H1 (cell line): ENCODE measurements at regions of chr7 and their contacts with region 1.

Region 1: DNA sequence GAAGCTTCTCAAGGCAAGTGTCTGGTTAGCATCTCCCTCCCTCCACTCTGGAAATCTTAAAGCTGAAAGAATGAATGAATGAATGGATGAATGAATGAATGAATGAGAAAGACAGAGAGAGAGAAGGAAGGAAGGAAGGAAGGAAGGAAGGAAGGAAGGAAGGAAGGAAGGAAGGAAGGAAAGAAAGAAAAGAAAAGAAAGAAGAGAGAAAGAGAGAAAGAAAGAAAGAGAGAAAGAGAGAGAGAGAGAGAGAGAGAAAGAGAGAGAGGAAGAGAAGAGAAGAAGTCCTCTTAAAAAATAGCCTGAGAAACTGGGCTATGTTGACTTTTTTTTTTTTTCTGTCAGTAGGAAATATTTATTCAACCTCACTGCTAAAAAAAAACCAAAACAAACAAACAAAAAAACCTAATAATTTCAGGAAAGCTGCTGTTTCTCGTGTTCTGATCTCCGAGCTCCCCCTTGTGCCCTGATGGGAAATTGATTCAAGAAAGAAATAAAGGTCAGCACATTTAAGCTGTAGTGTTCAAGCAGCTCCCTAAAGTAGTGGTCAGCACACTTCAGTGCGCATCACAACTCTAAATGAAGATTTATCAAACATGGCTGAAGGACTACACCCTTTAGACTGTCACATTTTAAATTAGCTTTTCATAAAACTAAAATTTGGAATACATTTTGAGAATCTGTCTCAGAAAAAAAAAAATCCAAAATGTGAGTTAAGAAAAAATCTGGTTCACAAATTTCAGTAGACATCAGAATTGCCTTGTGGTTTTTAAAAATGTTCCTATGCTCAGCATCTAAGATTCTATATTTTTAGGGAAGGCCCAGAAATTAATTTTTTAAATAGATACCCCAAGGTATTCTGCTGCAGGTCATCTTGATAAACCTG is 154.3 kb downstream of the ELAPOR2 start:
- DNase-seq: no peak
- H3K4me3 ChIP-seq: no peak overlapping the region
- H3K27ac ChIP-seq: no peak overlapping the region
- H3K4me1 ChIP-seq: no peaks in the 10 kb centered on the region
- H3K27me3 ChIP-seq: no peaks in the 10 kb centered on the region
- CTCF ChIP-seq: peak in 2 of 3 experiments; percentile 57 to 71; a peak in 3 of 4 replicates
- EP300 ChIP-seq: no peak
- POLR2A ChIP-seq: no peak
- RAD21 ChIP-seq: peak; percentile 83 to 89

Region 2: DNA sequence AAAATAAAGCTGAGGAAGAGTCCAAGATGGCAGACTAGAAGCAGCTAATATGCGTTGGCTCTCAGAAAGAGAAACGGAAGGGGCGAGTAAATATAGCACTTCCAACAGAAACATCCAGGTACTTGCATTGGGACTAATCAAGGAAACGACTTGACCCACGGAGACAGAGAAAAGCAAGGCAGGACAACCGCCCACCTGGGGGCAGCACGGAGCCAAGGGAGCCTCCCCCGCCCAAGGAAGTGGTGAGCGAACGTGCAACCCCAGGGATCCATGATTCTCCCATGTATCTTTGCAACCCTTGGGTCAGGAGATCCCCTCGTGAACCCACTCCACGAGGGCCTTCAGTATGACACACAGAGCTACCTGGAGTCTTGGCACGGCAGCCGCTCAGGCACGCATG is 306.9 kb before region 1 on chr7:
- CTCF ChIA-PET with region 1: interaction called, 29 read pairs
- POLR2A ChIA-PET with region 1: no interaction called
- DNase-seq: peak; percentile 56 to 88
- H3K4me3 ChIP-seq: no peak overlapping the region
- H3K27ac ChIP-seq: no peak overlapping the region
- H3K4me1 ChIP-seq: no peaks in the 10 kb centered on the region
- H3K27me3 ChIP-seq: no peaks in the 10 kb centered on the region
- CTCF ChIP-seq: peak; percentile 61 to 80 (median 79)
- EP300 ChIP-seq: no peak
- POLR2A ChIP-seq: no peak
- RAD21 ChIP-seq: peak; percentile 69

Region 3: DNA sequence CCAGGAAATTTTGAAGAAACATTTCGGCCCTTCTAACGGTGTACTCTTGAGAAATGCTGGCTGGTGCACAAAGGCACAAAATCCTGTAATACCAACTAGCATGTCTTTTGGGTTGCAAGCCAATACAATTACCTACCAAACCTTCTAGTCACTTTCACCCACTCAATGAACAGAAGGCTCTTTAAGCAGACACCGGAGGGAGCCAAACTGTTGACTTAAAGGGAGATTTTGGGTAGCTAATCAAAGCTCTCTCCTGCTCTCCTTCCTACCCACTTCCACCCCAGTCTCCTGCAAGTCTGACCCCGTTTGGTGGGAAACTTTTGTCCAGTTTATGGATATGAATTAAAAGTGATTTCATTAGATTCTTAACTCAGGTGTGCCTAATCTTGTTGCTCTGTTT is 237.5 kb before region 1 on chr7:
- CTCF ChIA-PET with region 1: interaction called, 21 read pairs
- POLR2A ChIA-PET with region 1: no interaction called
- DNase-seq: no peak
- H3K4me3 ChIP-seq: no peak overlapping the region
- H3K27ac ChIP-seq: no peak overlapping the region
- H3K4me1 ChIP-seq: peaks cover 0 to 14% (median 1%) of the 10 kb centered on the region in 4 experiments; a peak in 5 of 7 replicates
- H3K27me3 ChIP-seq: no peaks in the 10 kb centered on the region
- CTCF ChIP-seq: peak in 2 of 3 experiments; percentile 59 to 64; a peak in 3 of 4 replicates
- EP300 ChIP-seq: no peak
- POLR2A ChIP-seq: no peak
- RAD21 ChIP-seq: peak; percentile 77 to 85

Region 4: DNA sequence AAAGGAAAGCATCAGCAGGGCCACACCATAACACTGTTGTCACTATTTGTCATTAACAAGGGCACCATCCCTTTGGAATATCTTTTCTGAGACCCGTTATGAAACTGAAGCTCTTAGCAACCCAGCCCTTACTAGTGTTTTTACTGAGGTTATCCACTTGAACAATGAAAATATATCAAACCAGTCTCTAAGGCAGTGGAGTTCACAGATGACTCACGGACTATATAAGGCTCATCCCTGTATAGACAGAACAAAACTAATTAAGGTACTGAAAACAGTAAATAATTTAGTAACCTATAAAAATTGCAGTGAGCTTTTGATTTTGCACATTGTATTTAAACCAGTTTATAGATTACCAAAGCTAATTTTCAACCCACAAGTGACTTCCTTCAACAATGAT is 41.7 kb before region 1 on chr7:
- CTCF ChIA-PET with region 1: interaction called, 11 read pairs
- POLR2A ChIA-PET with region 1: no interaction called
- DNase-seq: no peak
- H3K4me3 ChIP-seq: no peak overlapping the region
- H3K27ac ChIP-seq: no peak overlapping the region
- H3K4me1 ChIP-seq: peaks cover 0 to 5% (median 0%) of the 10 kb centered on the region in 4 experiments; a peak in 1 of 7 replicates
- H3K27me3 ChIP-seq: no peaks in the 10 kb centered on the region
- CTCF ChIP-seq: no peak
- EP300 ChIP-seq: no peak
- POLR2A ChIP-seq: no peak
- RAD21 ChIP-seq: no peak